Activated T-helper 1 cell treated with anti-CD3 and anti-CD28 coated beads, Interleukin-12 subunit alpha, Interleukin-12 subunit beta, Interleukin-2, Interleukin-4 antibody, amounts not matched to agents 30 ng/mL and 10 ng/mL and 1 ng/mL, durations not matched to agents 14 hours and 24 hours and 36 hours (primary cell): ENCODE measurements at regions of chr1 and their contacts with region 1.

Region 1: GRCh38 chr1:25247024-25247828 is at the start of gene RSRP1:
- DNase-seq: peak; percentile 100
- H3K4me3 Mint-ChIP-seq: peak within 1 kb of the TSS; percentile 92
- H3K27ac Mint-ChIP-seq: peak within 1 kb of the TSS; percentile 99
- H3K4me1 Mint-ChIP-seq: peaks cover 50% of the 10 kb centered on the region
- H3K27me3 Mint-ChIP-seq: peaks cover 2% of the 10 kb centered on the region
- total RNA-seq, gene RSRP1: 123 and 129 TPM in 2 replicates

Region 2: DNA sequence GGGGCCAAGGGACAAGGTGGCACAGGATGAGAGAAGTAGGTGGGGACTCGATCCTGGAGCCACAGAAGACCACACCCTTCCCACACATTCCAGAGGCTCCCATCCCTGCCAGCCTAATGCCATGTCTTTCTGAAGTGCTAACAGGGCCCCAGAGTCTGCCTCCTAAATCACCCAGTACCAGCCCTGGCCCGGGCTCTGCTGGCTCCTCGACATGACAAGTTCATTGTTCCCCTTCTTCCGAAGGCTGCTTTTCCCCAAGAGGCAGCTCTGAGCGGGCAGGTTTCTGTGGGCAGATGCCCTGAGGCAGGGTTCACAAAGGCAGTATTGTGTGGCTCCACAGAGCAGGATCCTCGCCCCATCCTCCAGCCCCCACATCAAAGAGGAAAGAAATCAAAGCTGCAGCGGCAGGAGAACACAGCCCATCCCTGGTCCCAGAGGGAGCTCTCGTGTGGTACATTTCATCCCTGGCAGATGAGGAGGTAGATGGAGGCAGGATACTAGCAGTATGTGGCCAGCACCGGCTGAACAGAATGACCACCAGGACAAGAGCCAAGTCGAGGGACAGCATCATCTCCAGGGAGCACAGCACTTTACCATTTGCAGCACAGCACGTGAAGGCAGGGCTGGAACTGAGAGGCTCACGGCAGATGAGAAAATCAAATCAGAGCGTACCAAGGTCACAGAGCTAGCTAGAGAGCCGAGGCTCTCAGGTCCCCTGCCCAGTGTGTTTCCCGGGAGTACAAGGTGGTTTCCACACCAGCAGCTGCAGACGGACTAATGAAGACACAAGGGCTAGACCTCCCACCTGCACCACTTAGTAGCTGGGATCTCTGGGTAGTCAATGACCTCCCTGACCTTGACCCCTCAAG is 79.7 kb before region 1 on chr1:
- intact Hi-C with region 1: no loop called
- DNase-seq: no peak
- H3K4me3 Mint-ChIP-seq: no peak overlapping the region
- H3K27ac Mint-ChIP-seq: no peak overlapping the region
- H3K4me1 Mint-ChIP-seq: no peaks in the 10 kb centered on the region
- H3K27me3 Mint-ChIP-seq: peaks cover 6% of the 10 kb centered on the region

Region 3: GRCh38 chr1:25232027-25232865 is 15.0 kb before region 1 on chr1 and contains the start of gene SYF2:
- intact Hi-C with region 1: loop called (anchors 1 kb)
- DNase-seq: peak; percentile 83
- H3K4me3 Mint-ChIP-seq: no peak within 1 kb of the TSS
- H3K27ac Mint-ChIP-seq: no peak within 1 kb of the TSS
- H3K4me1 Mint-ChIP-seq: peaks cover 32% of the 10 kb centered on the region
- H3K27me3 Mint-ChIP-seq: no peaks in the 10 kb centered on the region
- total RNA-seq, gene SYF2: 40.7 and 41.4 TPM in 2 replicates

Region 4: GRCh38 chr1:25338188-25338981 is 91.2 kb after region 1 on chr1 and contains the start of gene TMEM50A:
- intact Hi-C with region 1: loop called (anchors 2 kb)
- DNase-seq: peak; percentile 96
- H3K4me3 Mint-ChIP-seq: peak within 1 kb of the TSS; percentile 94
- H3K27ac Mint-ChIP-seq: peak within 1 kb of the TSS; percentile 94
- H3K4me1 Mint-ChIP-seq: peaks cover 36% of the 10 kb centered on the region
- H3K27me3 Mint-ChIP-seq: no peaks in the 10 kb centered on the region
- total RNA-seq, gene TMEM50A: 99.8 and 102 TPM in 2 replicates

Region 5: GRCh38 chr1:25819576-25820246 is 572.5 kb after region 1 on chr1 and contains the start of gene MTFR1L:
- intact Hi-C with region 1: loop called (anchors 1 kb)
- DNase-seq: peak; percentile 93
- H3K4me3 Mint-ChIP-seq: peak within 1 kb of the TSS; percentile 97
- H3K27ac Mint-ChIP-seq: peak within 1 kb of the TSS; percentile 93
- H3K4me1 Mint-ChIP-seq: peaks cover 35% of the 10 kb centered on the region
- H3K27me3 Mint-ChIP-seq: no peaks in the 10 kb centered on the region
- total RNA-seq, gene MTFR1L: 29.3 and 30.0 TPM in 2 replicates